Psoas muscle (tissue), 8 donors: ENCODE measurements at regions of chr11 and their contacts with region 1.

Region 1: GRCh38 chr11:130434521-130435223 is 6.3 kb upstream of the ADAMTS8 start:
- DNase-seq: peak; percentile 68 to 83
- ATAC-seq: peak; percentile 90 to 95 (median 92)
- H3K4me3 ChIP-seq: peak overlapping the region; percentile 66
- H3K27ac ChIP-seq: peak overlapping the region; percentile 48
- H3K4me1 ChIP-seq: peaks cover 11% of the 10 kb centered on the region
- H3K27me3 ChIP-seq: peaks cover 0 to 11% (median 3%) of the 10 kb centered on the region in 3 donors
- CTCF ChIP-seq: peak; percentile 87

Region 2: GRCh38 chr11:130499828-130500227 is 65.2 kb after region 1 on chr11:
- intact Hi-C with region 1: no loop called
- DNase-seq: no peak
- ATAC-seq: no peak
- H3K4me3 ChIP-seq: no peak overlapping the region
- H3K27ac ChIP-seq: no peak overlapping the region
- H3K4me1 ChIP-seq: no peaks in the 10 kb centered on the region
- H3K27me3 ChIP-seq: no peaks in the 10 kb centered on the region
- CTCF ChIP-seq: no peak

Region 3: GRCh38 chr11:130671801-130672700 is 237.4 kb after region 1 on chr11:
- intact Hi-C with region 1: loop called in 1 of 2 experiments (anchors 5 kb)
- DNase-seq: peak; percentile 54 to 73
- ATAC-seq: peak; percentile 59 to 80 (median 62)
- H3K4me3 ChIP-seq: no peak overlapping the region
- H3K27ac ChIP-seq: no peak overlapping the region
- H3K4me1 ChIP-seq: peaks cover 44% of the 10 kb centered on the region
- H3K27me3 ChIP-seq: no peaks in the 10 kb centered on the region
- CTCF ChIP-seq: no peak

Region 4: GRCh38 chr11:130861902-130862860 is 427.5 kb after region 1 on chr11:
- intact Hi-C with region 1: loop called (anchors 1 to 2 kb)
- DNase-seq: peak; percentile 90 to 95
- ATAC-seq: peak; percentile 63 to 73 (median 69)
- H3K4me3 ChIP-seq: no peak overlapping the region
- H3K27ac ChIP-seq: peak overlapping the region; percentile 61
- H3K4me1 ChIP-seq: peaks cover 45% of the 10 kb centered on the region
- H3K27me3 ChIP-seq: no peaks in the 10 kb centered on the region
- CTCF ChIP-seq: peak; percentile 100

Region 5: GRCh38 chr11:130894322-130895025 is 459.8 kb after region 1 on chr11:
- intact Hi-C with region 1: loop called (anchors 1 to 2 kb)
- DNase-seq: peak; percentile 64 to 79
- ATAC-seq: peak; percentile 59 to 74 (median 66)
- H3K4me3 ChIP-seq: no peak overlapping the region
- H3K27ac ChIP-seq: no peak overlapping the region
- H3K4me1 ChIP-seq: peaks cover 29% of the 10 kb centered on the region
- H3K27me3 ChIP-seq: no peaks in the 10 kb centered on the region
- CTCF ChIP-seq: peak; percentile 94

Region 6: DNA sequence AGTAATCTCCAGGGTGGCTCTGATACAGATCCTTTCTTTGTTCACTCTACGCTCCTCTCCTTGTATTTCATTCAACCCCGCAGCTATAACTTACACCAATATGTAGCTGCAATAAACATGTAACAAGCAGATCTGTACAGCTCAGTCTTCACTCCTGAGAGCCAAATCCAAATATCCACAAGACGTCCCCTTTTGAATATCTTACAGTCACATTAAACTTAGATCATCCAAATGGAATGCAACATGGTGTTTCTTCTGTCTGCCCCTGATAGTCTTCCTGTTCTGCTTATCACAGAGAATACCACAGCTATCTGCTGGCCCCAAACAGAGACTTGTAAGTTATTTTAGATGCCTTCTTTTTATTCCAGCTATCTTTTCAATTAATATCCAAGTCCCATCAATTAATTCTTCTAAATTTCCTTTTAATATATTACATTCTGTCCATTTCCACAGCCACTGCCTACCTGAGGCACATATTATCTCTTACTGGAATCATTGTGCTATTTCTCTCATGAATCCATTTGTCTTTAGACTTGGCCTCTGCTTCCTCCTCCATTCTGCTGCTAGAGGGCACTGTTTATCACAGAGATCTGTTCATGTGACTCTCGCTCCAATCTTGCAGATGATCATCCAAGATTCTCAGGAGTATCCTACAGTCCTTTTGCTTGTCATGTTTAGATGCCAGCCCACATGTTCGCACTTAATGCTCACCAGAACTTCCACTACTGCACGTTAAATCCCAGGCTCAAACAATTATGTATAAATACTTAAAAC is 1844.3 kb after region 1 on chr11:
- intact Hi-C with region 1: no loop called
- DNase-seq: no peak
- ATAC-seq: peak in 1 of 4 donors; percentile 54
- H3K4me3 ChIP-seq: no peak overlapping the region
- H3K27ac ChIP-seq: no peak overlapping the region
- H3K4me1 ChIP-seq: no peaks in the 10 kb centered on the region
- H3K27me3 ChIP-seq: no peaks in the 10 kb centered on the region
- CTCF ChIP-seq: peak; percentile 20